MCF 10A (cell line): ENCODE measurements at regions of chr2 and their contacts with region 1.

Region 1: GRCh38 chr2:168948621-168949212 is 47.6 kb downstream of the G6PC2 start:
- DNase-seq: peak; percentile 41
- H3K4me3 Mint-ChIP-seq: no peak overlapping the region
- H3K27ac Mint-ChIP-seq: no peak overlapping the region
- H3K4me1 Mint-ChIP-seq: no peaks in the 10 kb centered on the region
- H3K27me3 Mint-ChIP-seq: peaks cover 12% of the 10 kb centered on the region
- CTCF ChIP-seq: peak; percentile 59

Region 2: GRCh38 chr2:168687314-168687713 is 261.4 kb before region 1 on chr2:
- CTCF ChIA-PET with region 1: no interaction called
- POLR2A ChIA-PET with region 1: no interaction called
- intact Hi-C with region 1: no loop called
- DNase-seq: peak; percentile 34
- H3K4me3 Mint-ChIP-seq: no peak overlapping the region
- H3K27ac Mint-ChIP-seq: no peak overlapping the region
- H3K4me1 Mint-ChIP-seq: peaks cover 10% of the 10 kb centered on the region
- H3K27me3 Mint-ChIP-seq: no peaks in the 10 kb centered on the region
- CTCF ChIP-seq: peak; percentile 13

Region 3: GRCh38 chr2:169131587-169132512 is 183.1 kb after region 1 on chr2:
- CTCF ChIA-PET with region 1: interaction called, 10 read pairs
- POLR2A ChIA-PET with region 1: no interaction called
- intact Hi-C with region 1: no loop called
- DNase-seq: peak; percentile 78
- H3K4me3 Mint-ChIP-seq: no peak overlapping the region
- H3K27ac Mint-ChIP-seq: no peak overlapping the region
- H3K4me1 Mint-ChIP-seq: no peaks in the 10 kb centered on the region
- H3K27me3 Mint-ChIP-seq: no peaks in the 10 kb centered on the region
- CTCF ChIP-seq: peak; percentile 73

Region 4: DNA sequence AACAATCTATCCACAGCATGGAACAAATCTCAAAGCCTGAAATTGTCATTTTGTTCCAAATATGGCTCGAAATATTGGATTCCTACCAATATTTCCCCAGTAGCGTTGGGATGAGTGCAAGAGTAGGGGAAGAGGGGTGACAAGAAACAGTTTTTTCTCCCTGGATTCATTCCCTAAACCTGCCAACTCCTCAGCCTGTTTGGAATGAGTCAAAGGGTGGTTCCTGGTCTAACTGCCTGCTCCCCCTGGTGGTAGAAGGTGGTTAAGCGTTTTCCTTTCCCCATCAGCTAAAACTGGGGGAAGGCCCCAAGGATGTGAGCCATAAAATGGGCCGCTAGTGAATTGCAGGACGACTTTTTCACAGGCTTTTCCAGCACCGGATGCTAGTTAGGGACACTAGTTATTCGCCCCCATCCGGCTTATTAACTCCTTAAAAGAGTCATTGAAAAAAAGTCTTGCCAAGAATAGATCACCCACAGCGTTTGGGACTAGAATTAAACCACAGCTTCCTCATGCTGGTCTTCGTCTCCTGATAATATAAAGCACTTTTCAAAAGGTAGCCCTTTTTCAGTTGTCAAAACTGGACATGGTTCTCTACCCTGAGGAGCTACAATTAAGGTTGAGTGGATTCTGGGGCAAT is 193.1 kb after region 1 on chr2:
- CTCF ChIA-PET with region 1: interaction called, 11 read pairs
- POLR2A ChIA-PET with region 1: no interaction called
- intact Hi-C with region 1: no loop called
- DNase-seq: peak; percentile 83
- H3K4me3 Mint-ChIP-seq: no peak overlapping the region
- H3K27ac Mint-ChIP-seq: no peak overlapping the region
- H3K4me1 Mint-ChIP-seq: peaks cover 6% of the 10 kb centered on the region
- H3K27me3 Mint-ChIP-seq: no peaks in the 10 kb centered on the region
- CTCF ChIP-seq: peak; percentile 76

Region 5: GRCh38 chr2:169221745-169222369 is 273.1 kb after region 1 on chr2:
- CTCF ChIA-PET with region 1: interaction called, 17 read pairs
- POLR2A ChIA-PET with region 1: no interaction called
- intact Hi-C with region 1: loop called (anchors 5 kb)
- DNase-seq: peak; percentile 42
- H3K4me3 Mint-ChIP-seq: no peak overlapping the region
- H3K27ac Mint-ChIP-seq: no peak overlapping the region
- H3K4me1 Mint-ChIP-seq: no peaks in the 10 kb centered on the region
- H3K27me3 Mint-ChIP-seq: no peaks in the 10 kb centered on the region
- CTCF ChIP-seq: peak; percentile 41

Region 6: DNA sequence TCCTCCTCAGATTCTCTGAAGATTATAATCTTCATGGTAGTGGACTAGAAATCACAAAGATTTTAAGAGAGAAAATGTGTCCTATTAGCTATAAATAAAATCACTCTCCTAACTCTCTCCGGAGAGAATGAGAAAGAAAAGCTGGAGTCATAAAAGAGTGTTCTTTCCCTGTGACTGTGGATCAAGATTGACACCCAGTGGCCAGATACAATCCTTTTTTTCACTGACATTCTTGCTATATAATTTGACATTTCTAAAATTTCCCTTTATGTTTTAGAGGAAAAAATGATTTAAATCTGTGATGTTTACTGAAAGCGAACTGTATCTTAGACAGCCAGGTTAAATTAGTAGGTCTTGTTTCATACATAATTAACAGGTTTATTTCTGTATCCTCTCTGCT is 449.0 kb after region 1 on chr2:
- CTCF ChIA-PET with region 1: interaction called, 5 read pairs
- POLR2A ChIA-PET with region 1: no interaction called
- intact Hi-C with region 1: loop called (anchors 5 kb)
- DNase-seq: peak; percentile 27
- H3K4me3 Mint-ChIP-seq: no peak overlapping the region
- H3K27ac Mint-ChIP-seq: no peak overlapping the region
- H3K4me1 Mint-ChIP-seq: peaks cover 6% of the 10 kb centered on the region
- H3K27me3 Mint-ChIP-seq: peaks cover 38% of the 10 kb centered on the region
- CTCF ChIP-seq: peak; percentile 28